Vagina (tissue), 2 donors: ENCODE measurements at regions of chr2 and their contacts with region 1.

Region 1: GRCh38 chr2:22812065-22812680 is 572.8 kb upstream of the KLHL29 start:
- DNase-seq: no peak
- H3K4me3 ChIP-seq: no peak overlapping the region
- H3K27ac ChIP-seq: no peak overlapping the region
- H3K4me1 ChIP-seq: no peaks in the 10 kb centered on the region
- H3K27me3 ChIP-seq: no peaks in the 10 kb centered on the region
- CTCF ChIP-seq: no peak
- POLR2A ChIP-seq: no peak

Region 2: DNA sequence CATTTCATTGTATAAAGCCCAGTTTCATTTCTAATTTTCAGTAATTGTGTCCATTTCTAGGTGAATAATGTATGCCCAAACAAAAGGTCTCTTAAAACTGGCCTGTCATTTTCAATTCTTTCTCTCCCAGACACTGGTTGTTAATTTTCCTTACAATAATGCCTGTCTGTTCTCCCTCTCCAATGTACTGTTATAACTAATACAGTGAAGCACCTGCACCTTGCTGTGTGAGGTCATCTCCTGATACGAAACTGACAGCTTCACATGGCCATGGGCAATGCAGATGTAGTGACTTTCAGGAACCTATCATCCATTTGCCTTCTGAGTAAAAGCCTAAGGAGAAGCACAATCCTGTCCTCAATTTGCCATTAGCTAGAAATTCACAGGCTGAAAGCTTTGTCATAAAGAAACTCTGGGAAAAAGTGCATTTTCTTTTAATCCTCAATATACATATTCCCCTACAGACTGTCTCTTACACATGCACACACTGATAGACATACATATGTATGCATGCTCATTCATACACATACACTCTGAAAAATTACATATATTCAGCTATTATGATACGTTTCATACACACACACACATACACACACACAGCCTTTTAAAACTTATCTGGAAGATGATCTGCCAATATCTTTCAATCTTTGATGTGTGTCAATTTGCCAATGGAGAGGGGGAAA is 658.1 kb before region 1 on chr2:
- intact Hi-C with region 1: loop called (anchors 5 kb)
- DNase-seq: no peak
- H3K4me3 ChIP-seq: no peak overlapping the region
- H3K27ac ChIP-seq: no peak overlapping the region
- H3K4me1 ChIP-seq: no peaks in the 10 kb centered on the region
- H3K27me3 ChIP-seq: no peaks in the 10 kb centered on the region
- CTCF ChIP-seq: no peak
- POLR2A ChIP-seq: no peak